ENCODE measurements at regions of chr20 and their contacts with region 1.

Region 1: DNA sequence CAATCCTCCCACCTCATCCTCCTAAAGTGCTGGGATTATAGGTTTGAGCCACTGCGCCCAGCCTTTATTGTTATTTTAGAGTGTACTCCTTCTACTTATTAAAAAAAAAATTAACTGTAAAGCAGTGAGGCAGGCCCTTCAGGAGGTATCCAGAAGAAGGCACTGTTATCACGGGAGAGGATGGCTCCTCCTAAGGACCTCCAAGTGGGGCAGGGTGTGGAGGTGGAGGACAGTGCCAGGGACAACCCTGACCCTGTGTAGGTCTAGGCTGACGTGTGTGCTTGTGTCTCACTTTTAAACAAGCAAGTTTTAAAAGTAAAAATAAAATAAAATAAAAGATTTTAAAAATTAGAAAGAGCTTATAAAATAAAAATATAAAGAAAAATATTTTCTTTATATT is 23.7 kb upstream of the TAF4 start:
- DNase-seq: no peak
- H3K4me3 Mint-ChIP-seq: no peak overlapping the region
- H3K27ac Mint-ChIP-seq: no peak overlapping the region
- H3K4me1 Mint-ChIP-seq: no peaks in the 10 kb centered on the region
- H3K27me3 Mint-ChIP-seq: peaks cover 14% of the 10 kb centered on the region
- CTCF ChIP-seq: no peak

Region 2: GRCh38 chr20:62111148-62111547 is 21.8 kb after region 1 on chr20:
- CTCF ChIA-PET with region 1: no interaction called
- intact Hi-C with region 1: no loop called
- DNase-seq: no peak
- H3K4me3 Mint-ChIP-seq: no peak overlapping the region
- H3K27ac Mint-ChIP-seq: no peak overlapping the region
- H3K4me1 Mint-ChIP-seq: no peaks in the 10 kb centered on the region
- H3K27me3 Mint-ChIP-seq: peaks cover 9% of the 10 kb centered on the region
- CTCF ChIP-seq: no peak

Region 3: GRCh38 chr20:63758152-63758551 is 1668.8 kb after region 1 on chr20:
- CTCF ChIA-PET with region 1: interaction called, 12 read pairs
- intact Hi-C with region 1: no loop called
- DNase-seq: no peak
- H3K4me3 Mint-ChIP-seq: no peak overlapping the region
- H3K27ac Mint-ChIP-seq: no peak overlapping the region
- H3K4me1 Mint-ChIP-seq: no peaks in the 10 kb centered on the region
- H3K27me3 Mint-ChIP-seq: peaks cover 43% of the 10 kb centered on the region
- CTCF ChIP-seq: no peak

Measured in Calu3 (cell line).